Heart left ventricle (tissue), 16 donors: ENCODE measurements at regions of chr17 and their contacts with region 1.

Region 1: DNA sequence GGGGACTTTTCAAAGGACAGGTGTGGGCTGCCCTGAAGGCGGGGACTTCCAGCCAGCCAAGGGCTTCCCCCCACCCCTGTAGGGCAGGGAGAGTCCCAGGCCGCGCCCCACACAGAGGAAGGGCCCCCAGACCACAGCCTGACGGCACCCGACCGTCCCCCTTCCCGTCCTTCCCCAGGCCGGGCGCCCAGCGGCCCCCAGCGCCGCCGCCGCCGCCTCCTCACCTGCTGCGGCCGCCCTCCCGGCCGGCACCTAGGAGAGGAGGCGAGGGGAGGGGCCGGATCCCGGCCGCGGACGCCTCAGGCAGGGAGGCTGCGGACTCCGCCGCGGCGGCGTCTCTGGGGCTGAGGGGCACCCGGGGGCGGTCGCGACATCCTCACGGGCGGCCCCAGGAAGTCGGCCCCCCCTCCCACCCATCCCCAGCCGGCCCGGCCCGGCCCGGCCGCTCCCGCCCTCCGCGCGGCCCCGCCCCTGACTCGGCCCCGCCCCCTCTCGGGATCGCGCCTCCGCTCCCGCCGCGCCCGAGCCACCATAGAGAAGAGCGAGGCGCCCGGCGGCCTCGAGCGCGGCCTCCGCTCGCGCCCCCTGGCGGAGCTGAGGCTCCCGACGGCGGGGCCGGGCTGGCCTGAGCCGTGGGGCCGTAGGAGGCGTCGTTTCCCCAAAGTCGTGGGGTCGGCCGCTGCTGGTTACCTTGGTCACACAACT is 25.5 kb upstream of the RFFL start:
- DNase-seq: peak; percentile 86 to 94 (median 90)
- ATAC-seq: peak; percentile 86 to 98 (median 96)
- H3K4me3 ChIP-seq: peak overlapping the region; percentile 57 to 99 (median 92)
- H3K27ac ChIP-seq: peak overlapping the region; percentile 70 to 95 (median 84)
- H3K4me1 ChIP-seq: peaks cover 0 to 24% (median 10%) of the 10 kb centered on the region in 12 donors
- H3K27me3 ChIP-seq: no peaks in the 10 kb centered on the region
- CTCF ChIP-seq: peak; percentile 66 to 96 (median 84)
- POLR2A ChIP-seq: peak in 1 of 2 donors; percentile 53

Region 2: DNA sequence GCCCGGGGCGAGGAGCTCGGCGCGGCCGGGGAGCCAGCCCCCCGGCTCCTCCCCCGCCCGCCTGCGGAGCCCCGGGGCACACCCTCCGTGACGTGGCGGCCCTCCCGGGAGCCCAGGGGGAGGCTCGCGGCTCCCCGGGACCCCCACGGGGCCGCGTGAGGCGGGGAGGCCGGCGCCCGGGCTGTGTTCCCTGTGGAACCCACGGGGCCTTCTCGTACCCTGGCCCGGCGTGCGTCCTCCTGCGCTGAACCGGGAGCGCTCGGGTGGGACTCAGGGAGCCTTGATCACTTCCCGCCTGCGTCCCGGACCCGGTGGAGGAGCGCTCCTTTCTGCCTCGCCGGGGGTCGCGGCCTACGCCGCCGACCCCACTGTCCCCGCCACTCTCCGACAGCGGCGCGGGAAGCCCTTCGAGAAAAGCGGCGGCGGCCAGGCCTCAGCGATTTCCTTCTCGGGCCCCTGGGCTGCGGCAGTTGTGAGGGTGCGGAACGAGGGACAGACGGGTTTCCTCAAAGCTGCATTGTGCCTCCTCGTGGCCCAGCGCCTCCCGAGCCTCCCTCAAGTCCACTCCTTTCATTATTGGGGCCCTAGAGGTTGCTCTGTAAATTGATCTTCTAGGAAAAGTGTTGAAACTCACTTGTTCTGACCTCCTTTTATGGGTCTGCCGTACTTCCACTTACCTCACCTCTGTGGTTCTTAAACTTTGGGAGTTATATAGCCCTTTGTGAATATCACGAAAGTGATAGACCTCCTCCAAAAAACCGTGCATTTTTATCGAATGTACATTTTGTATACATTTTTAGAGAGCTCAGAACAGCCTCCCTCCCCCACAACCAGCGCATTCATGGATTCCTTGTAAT is 108.1 kb before region 1 on chr17:
- intact Hi-C with region 1: loop called in 4 of 10 experiments (anchors 5 to 10 kb)
- DNase-seq: peak; percentile 78 to 89 (median 80)
- ATAC-seq: peak; percentile 65 to 96 (median 92)
- H3K4me3 ChIP-seq: peak overlapping the region; percentile 69 to 98 (median 92)
- H3K27ac ChIP-seq: peak overlapping the region; percentile 95 to 100 (median 98)
- H3K4me1 ChIP-seq: peaks cover 0 to 28% (median 18%) of the 10 kb centered on the region in 12 donors
- H3K27me3 ChIP-seq: no peaks in the 10 kb centered on the region
- CTCF ChIP-seq: peak in 9 of 12 donors; percentile 11 to 56 (median 39)
- POLR2A ChIP-seq: peak in 1 of 2 donors; percentile 42

Region 3: GRCh38 chr17:34998205-34998604 is 90.8 kb before region 1 on chr17:
- intact Hi-C with region 1: loop called in 4 of 10 experiments (anchors 1 to 5 kb)
- DNase-seq: peak; percentile 56 to 83 (median 67)
- ATAC-seq: peak; percentile 72 to 89 (median 82)
- H3K4me3 ChIP-seq: no peak overlapping the region
- H3K27ac ChIP-seq: peak overlapping the region in 9 of 12 donors; percentile 29 to 78 (median 64)
- H3K4me1 ChIP-seq: peaks cover 0 to 38% (median 7%) of the 10 kb centered on the region in 12 donors
- H3K27me3 ChIP-seq: no peaks in the 10 kb centered on the region
- CTCF ChIP-seq: peak; percentile 56 to 73 (median 63)
- POLR2A ChIP-seq: no peak

Region 4: DNA sequence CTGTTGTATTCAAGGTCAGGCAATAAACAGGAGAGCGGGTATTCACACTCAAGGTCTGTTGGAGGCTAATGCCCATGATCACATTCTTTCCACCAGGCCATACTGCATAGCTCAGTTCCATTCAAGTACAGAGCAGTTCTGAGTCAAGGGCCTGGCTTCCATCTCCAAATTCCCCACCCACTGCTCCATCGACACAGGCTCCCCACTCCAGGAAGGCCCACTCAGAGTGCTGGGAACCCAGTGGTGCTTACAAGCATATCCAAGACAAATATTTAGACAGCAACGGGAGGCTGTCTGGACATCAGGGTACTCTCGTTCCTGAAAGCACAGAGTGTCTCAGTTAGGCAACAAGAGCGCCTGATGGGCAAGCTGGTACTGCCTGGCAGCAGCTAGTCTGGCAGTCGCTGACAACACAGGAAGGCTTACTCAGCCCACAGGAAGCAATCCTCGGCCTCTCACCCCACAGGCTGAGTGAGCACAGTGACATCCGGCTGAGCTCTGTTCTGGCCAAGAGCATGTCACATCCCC is 66.4 kb before region 1 on chr17:
- intact Hi-C with region 1: loop called in 1 of 10 experiments (anchors 2 kb)
- DNase-seq: peak; percentile 62 to 91 (median 75)
- ATAC-seq: peak; percentile 94 to 97 (median 96)
- H3K4me3 ChIP-seq: no peak overlapping the region
- H3K27ac ChIP-seq: peak overlapping the region; percentile 54 to 88 (median 77)
- H3K4me1 ChIP-seq: peaks cover 0 to 32% (median 14%) of the 10 kb centered on the region in 12 donors
- H3K27me3 ChIP-seq: no peaks in the 10 kb centered on the region
- CTCF ChIP-seq: peak in 2 of 12 donors; percentile 9 to 22
- POLR2A ChIP-seq: no peak

Region 5: DNA sequence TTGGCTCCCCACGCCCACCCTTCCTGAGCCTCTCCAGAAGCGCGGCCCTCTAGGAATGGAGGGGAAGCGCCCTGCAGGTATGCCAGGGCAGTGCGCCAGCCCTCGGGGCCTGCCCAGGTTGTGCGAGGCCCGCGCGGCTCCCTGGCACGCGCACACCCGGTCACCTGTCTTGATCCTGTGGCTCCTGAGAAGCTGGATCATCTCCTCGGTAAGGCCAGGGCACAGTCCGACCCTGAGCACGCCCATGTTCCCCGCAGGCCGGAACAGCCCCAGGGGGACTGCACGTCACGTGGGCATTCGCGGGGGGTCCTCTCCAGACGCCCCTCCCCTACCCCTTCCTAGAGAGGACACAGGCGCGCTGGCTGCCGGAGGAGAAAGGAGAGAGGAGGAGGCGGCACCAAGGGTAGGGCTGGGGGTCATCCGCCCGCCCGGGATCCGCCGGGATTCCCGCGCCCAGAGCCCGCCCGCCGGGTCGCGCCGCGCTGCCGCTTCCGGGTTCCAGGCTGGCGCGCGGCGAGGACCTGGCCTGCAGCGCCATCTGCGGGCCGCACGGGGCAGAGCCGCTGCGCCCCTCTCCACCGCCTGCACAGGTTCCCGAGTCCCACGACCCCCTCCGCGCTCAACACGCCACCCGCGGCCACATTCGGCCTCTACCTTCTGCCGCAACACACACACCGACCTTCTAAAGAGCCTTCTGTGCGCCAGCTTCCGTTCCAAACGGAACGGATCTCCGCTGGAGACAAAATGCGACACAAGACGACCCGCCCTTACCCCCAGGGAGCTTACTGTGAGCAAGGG is 30.5 kb after region 1 on chr17 and contains the start of gene RAD51D:
- intact Hi-C with region 1: loop called in 1 of 10 experiments (anchors 2 kb)
- DNase-seq: peak; percentile 67 to 88 (median 73)
- ATAC-seq: peak; percentile 62 to 98 (median 95)
- H3K4me3 ChIP-seq: peak within 1 kb of the TSS; percentile 51 to 99 (median 90)
- H3K27ac ChIP-seq: peak within 1 kb of the TSS in 11 of 12 donors; percentile 8 to 86 (median 75)
- H3K4me1 ChIP-seq: peaks cover 0 to 20% (median 10%) of the 10 kb centered on the region in 12 donors
- H3K27me3 ChIP-seq: no peaks in the 10 kb centered on the region
- CTCF ChIP-seq: peak; percentile 67 to 98 (median 94)
- POLR2A ChIP-seq: peak in 1 of 2 donors; percentile 39
- total RNA-seq, gene RAD51D: 2.7 to 9.2 (median 5.0) TPM

Region 6: GRCh38 chr17:35175638-35176415 is 86.8 kb after region 1 on chr17:
- intact Hi-C with region 1: no loop called
- DNase-seq: no peak
- ATAC-seq: peak in 3 of 4 donors; percentile 26 to 55 (median 48)
- H3K4me3 ChIP-seq: no peak overlapping the region
- H3K27ac ChIP-seq: no peak overlapping the region
- H3K4me1 ChIP-seq: peaks cover 0 to 11% (median 0%) of the 10 kb centered on the region in 12 donors
- H3K27me3 ChIP-seq: no peaks in the 10 kb centered on the region
- CTCF ChIP-seq: no peak
- POLR2A ChIP-seq: no peak